Activated CD4-positive, alpha-beta T cell treated with anti-CD3 and anti-CD28 coated beads for 36 hours (primary cell): ENCODE measurements at regions of chr6 and their contacts with region 1.

Region 1: GRCh38 chr6:34696739-34697543 is at the start of gene ILRUN:
- DNase-seq: peak; percentile 98
- ATAC-seq: peak; percentile 84
- H3K4me3 Mint-ChIP-seq: peak within 1 kb of the TSS; percentile 92
- H3K27ac Mint-ChIP-seq: peak within 1 kb of the TSS; percentile 99
- H3K4me1 Mint-ChIP-seq: peaks cover 45% of the 10 kb centered on the region
- H3K27me3 Mint-ChIP-seq: no peaks in the 10 kb centered on the region
- total RNA-seq, gene ILRUN: 56.2 to 66.9 TPM

Region 2: GRCh38 chr6:33579828-33580714 is 1116.9 kb before region 1 on chr6 and contains the start of gene BAK1:
- CTCF ChIA-PET with region 1: no interaction called
- POLR2A ChIA-PET with region 1: no interaction called
- intact Hi-C with region 1: loop called in 1 of 2 experiments (anchors 10 kb)
- DNase-seq: peak; percentile 92
- ATAC-seq: peak; percentile 95
- H3K4me3 Mint-ChIP-seq: peak within 1 kb of the TSS; percentile 95
- H3K27ac Mint-ChIP-seq: peak within 1 kb of the TSS; percentile 98
- H3K4me1 Mint-ChIP-seq: peaks cover 31% of the 10 kb centered on the region
- H3K27me3 Mint-ChIP-seq: no peaks in the 10 kb centered on the region
- total RNA-seq, gene BAK1: 37.0 to 43.3 TPM

Region 3: DNA sequence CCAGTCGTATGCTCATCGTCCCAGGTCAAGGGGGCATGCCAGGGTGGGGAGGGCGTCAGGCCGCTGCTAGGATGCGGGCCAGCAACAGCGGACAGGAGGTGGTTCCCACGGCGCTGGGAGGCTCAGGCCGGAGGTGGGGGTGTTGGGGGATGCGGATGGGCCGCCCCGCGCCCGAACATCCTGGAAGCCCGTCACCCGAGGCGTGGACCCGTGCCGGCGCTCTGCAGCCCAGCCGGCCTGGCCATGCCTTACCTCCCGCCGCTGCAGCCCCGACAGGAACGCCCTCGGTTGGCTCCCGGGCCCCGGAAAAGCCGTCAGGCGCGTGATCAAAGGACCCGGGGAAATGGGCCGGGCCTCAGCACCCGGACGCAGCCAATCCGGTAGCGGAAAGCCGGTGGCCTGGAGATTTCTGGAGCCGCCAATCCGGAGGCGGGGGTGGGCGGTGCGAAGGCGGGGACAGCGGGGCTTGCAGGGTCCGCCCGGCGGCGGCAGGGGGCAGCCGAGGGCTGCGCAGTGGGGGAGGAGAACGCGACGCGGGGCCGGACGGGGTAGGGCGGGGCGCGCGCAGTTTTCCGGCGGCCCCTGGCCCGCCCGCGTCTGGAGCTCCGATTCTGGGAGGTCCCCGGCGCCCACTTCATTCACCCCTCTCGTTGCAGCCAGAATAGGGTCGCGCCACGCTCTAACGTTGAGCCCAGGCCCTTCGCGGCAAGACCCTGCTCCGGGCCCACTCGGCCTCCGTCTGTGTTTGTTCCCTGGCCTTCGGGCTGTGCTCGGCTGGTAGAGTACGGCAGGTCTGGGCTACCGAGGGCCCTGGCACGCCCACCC is 448.0 kb before region 1 on chr6 and contains the start of gene SMIM29:
- CTCF ChIA-PET with region 1: interaction called, 3 read pairs
- POLR2A ChIA-PET with region 1: no interaction called
- intact Hi-C with region 1: loop called in 1 of 2 experiments (anchors 1 kb)
- DNase-seq: peak; percentile 99
- ATAC-seq: peak; percentile 83
- H3K4me3 Mint-ChIP-seq: peak within 1 kb of the TSS; percentile 76
- H3K27ac Mint-ChIP-seq: peak within 1 kb of the TSS; percentile 85
- H3K4me1 Mint-ChIP-seq: peaks cover 43% of the 10 kb centered on the region
- H3K27me3 Mint-ChIP-seq: no peaks in the 10 kb centered on the region
- total RNA-seq, gene SMIM29: 15.8 to 16.3 TPM

Region 4: DNA sequence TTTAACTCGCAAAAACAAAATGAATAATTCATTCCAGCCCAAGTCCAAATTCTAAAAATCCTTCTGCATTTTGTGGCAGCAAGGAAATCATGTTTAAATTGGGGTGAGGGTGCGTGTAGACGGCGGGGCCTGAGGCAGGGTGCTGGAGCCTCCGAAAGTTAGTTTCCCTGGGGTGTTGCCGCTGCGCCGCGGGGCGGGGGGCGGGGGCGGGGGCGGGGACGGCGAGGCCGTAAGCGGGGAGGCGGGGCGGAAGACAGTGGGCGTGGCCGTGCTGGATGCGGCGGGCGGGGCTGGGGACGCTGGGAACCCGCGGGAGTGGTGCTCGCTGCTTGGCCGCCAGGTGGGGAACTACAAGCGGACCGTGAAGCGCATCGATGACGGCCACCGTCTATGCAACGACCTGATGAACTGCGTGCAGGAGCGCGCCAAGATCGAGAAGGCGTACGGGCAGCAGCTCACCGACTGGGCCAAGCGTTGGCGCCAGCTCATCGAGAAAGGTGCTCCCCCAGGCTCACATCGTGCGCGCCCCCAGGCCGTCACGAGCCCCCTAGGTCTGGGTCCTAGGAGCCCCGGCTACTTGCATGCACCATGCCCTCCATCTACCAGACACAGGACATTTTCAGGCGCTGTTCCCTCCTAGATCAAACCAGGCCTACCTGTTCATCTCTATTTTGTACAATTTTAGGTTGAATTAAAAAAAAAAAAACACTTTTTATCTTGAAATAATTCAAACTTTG is 169.8 kb before region 1 on chr6:
- CTCF ChIA-PET with region 1: no interaction called
- POLR2A ChIA-PET with region 1: no interaction called
- intact Hi-C with region 1: loop called in 1 of 2 experiments (anchors 1 kb)
- DNase-seq: peak; percentile 98
- ATAC-seq: peak; percentile 100
- H3K4me3 Mint-ChIP-seq: no peak overlapping the region
- H3K27ac Mint-ChIP-seq: no peak overlapping the region
- H3K4me1 Mint-ChIP-seq: peaks cover 3% of the 10 kb centered on the region
- H3K27me3 Mint-ChIP-seq: no peaks in the 10 kb centered on the region

Region 5: GRCh38 chr6:34671801-34672656 is 24.9 kb before region 1 on chr6:
- CTCF ChIA-PET with region 1: interaction called, 4 read pairs
- POLR2A ChIA-PET with region 1: interaction called, 3 read pairs
- intact Hi-C with region 1: loop called (anchors 1 to 2 kb)
- DNase-seq: peak; percentile 85
- ATAC-seq: peak; percentile 99
- H3K4me3 Mint-ChIP-seq: peak overlapping the region; percentile 65
- H3K27ac Mint-ChIP-seq: peak overlapping the region; percentile 93
- H3K4me1 Mint-ChIP-seq: peaks cover 65% of the 10 kb centered on the region
- H3K27me3 Mint-ChIP-seq: no peaks in the 10 kb centered on the region

Region 6: DNA sequence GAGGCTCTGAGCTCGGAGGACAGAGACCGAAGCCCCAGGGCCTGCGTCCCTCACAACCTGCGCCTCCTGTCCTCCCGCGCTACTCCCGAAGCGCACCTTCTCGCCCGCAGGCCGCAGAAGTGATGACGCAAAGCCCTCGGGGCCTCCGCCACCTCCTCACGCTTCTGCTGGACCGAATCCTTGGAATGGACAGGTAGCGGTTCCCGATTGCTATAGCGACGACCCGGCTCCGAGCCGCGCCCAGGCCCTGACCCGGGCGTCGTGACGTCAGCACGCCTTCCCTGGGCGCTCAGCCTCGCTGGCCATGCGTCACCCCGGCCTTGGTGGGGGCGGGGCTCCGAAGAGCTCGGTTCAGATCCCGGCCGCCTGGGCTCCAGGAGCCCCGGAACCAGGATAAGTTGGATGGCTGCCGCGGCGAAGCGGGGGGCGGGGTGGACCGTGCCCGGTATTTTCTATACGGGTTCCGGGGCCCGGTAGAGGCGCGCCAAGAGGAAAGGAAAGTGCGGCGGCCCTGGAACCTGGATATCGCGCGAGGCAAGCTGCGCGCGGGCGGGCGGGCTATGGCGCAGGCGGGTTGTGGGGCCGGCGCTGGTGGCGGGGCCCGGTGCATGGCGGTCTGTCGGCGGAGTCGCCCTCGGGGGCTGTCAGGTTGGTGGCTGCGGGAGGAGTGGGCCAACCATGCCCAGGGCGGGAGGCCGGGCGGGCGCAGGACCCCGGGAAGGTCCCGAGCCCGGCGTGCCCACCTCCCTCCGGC is 562.4 kb after region 1 on chr6 and contains the start of gene ZNF76:
- CTCF ChIA-PET with region 1: interaction called, 3 read pairs
- POLR2A ChIA-PET with region 1: no interaction called
- intact Hi-C with region 1: loop called in 1 of 2 experiments (anchors 1 kb)
- DNase-seq: peak; percentile 95
- ATAC-seq: peak; percentile 89
- H3K4me3 Mint-ChIP-seq: peak within 1 kb of the TSS; percentile 91
- H3K27ac Mint-ChIP-seq: peak within 1 kb of the TSS; percentile 90
- H3K4me1 Mint-ChIP-seq: peaks cover 45% of the 10 kb centered on the region
- H3K27me3 Mint-ChIP-seq: no peaks in the 10 kb centered on the region
- total RNA-seq, gene ZNF76: 35.2 to 40.1 TPM

Region 7: GRCh38 chr6:35503534-35503933 is 806.6 kb after region 1 on chr6:
- CTCF ChIA-PET with region 1: no interaction called
- POLR2A ChIA-PET with region 1: no interaction called
- intact Hi-C with region 1: no loop called
- DNase-seq: no peak
- ATAC-seq: no peak
- H3K4me3 Mint-ChIP-seq: no peak overlapping the region
- H3K27ac Mint-ChIP-seq: no peak overlapping the region
- H3K4me1 Mint-ChIP-seq: no peaks in the 10 kb centered on the region
- H3K27me3 Mint-ChIP-seq: peaks cover 6% of the 10 kb centered on the region